H1 (cell line): ENCODE measurements at regions of chr15 and their contacts with region 1.

Region 1: GRCh38 chr15:88897456-88898194 is 2.3 kb upstream of the HAPLN3 start:
- DNase-seq: peak in 1 of 2 experiments; percentile 63
- H3K4me3 ChIP-seq: no peak overlapping the region; a peak in 2 of 8 replicates
- H3K27ac ChIP-seq: no peak overlapping the region
- H3K4me1 ChIP-seq: peaks cover 0 to 37% (median 22%) of the 10 kb centered on the region in 4 experiments; a peak in 6 of 7 replicates
- H3K27me3 ChIP-seq: no peaks in the 10 kb centered on the region
- CTCF ChIP-seq: peak in 1 of 3 experiments; percentile 12; a peak in 1 of 4 replicates
- EP300 ChIP-seq: no peak
- POLR2A ChIP-seq: peak in 1 of 2 experiments; percentile 60; a peak in 1 of 3 replicates
- RAD21 ChIP-seq: no peak

Region 2: GRCh38 chr15:88878720-88879184 is 18.9 kb before region 1 on chr15:
- CTCF ChIA-PET with region 1: interaction called, 95 read pairs
- POLR2A ChIA-PET with region 1: interaction called, 361 read pairs
- DNase-seq: peak in 1 of 2 experiments; percentile 89
- H3K4me3 ChIP-seq: no peak overlapping the region
- H3K27ac ChIP-seq: no peak overlapping the region
- H3K4me1 ChIP-seq: peaks cover 0 to 6% (median under 1%) of the 10 kb centered on the region in 4 experiments; a peak in 3 of 7 replicates
- H3K27me3 ChIP-seq: no peaks in the 10 kb centered on the region
- CTCF ChIP-seq: peak; percentile 89 to 96 (median 95)
- EP300 ChIP-seq: no peak
- POLR2A ChIP-seq: no peak
- RAD21 ChIP-seq: peak; percentile 80 to 87

Region 3: GRCh38 chr15:88938802-88939485 is 41.3 kb after region 1 on chr15:
- CTCF ChIA-PET with region 1: interaction called, 5 read pairs
- POLR2A ChIA-PET with region 1: interaction called, 10 read pairs
- DNase-seq: peak in 1 of 2 experiments; percentile 52
- H3K4me3 ChIP-seq: no peak overlapping the region
- H3K27ac ChIP-seq: no peak overlapping the region
- H3K4me1 ChIP-seq: peaks cover 0 to 7% (median 2%) of the 10 kb centered on the region in 4 experiments; a peak in 4 of 7 replicates
- H3K27me3 ChIP-seq: no peaks in the 10 kb centered on the region
- CTCF ChIP-seq: no peak
- EP300 ChIP-seq: no peak
- POLR2A ChIP-seq: no peak
- RAD21 ChIP-seq: peak; percentile 5 to 45; a peak in 2 of 4 replicates

Region 4: GRCh38 chr15:89003865-89004725 is 106.5 kb after region 1 on chr15:
- CTCF ChIA-PET with region 1: interaction called, 94 read pairs
- POLR2A ChIA-PET with region 1: interaction called, 607 read pairs
- DNase-seq: no peak
- H3K4me3 ChIP-seq: no peak overlapping the region
- H3K27ac ChIP-seq: no peak overlapping the region; the same call in 1 of the 2 replicates
- H3K4me1 ChIP-seq: peaks cover 16 to 35% (median 20%) of the 10 kb centered on the region in 4 experiments
- H3K27me3 ChIP-seq: no peaks in the 10 kb centered on the region
- CTCF ChIP-seq: peak; percentile 71 to 79 (median 74)
- EP300 ChIP-seq: no peak
- POLR2A ChIP-seq: no peak
- RAD21 ChIP-seq: peak; percentile 82 to 87

Region 5: DNA sequence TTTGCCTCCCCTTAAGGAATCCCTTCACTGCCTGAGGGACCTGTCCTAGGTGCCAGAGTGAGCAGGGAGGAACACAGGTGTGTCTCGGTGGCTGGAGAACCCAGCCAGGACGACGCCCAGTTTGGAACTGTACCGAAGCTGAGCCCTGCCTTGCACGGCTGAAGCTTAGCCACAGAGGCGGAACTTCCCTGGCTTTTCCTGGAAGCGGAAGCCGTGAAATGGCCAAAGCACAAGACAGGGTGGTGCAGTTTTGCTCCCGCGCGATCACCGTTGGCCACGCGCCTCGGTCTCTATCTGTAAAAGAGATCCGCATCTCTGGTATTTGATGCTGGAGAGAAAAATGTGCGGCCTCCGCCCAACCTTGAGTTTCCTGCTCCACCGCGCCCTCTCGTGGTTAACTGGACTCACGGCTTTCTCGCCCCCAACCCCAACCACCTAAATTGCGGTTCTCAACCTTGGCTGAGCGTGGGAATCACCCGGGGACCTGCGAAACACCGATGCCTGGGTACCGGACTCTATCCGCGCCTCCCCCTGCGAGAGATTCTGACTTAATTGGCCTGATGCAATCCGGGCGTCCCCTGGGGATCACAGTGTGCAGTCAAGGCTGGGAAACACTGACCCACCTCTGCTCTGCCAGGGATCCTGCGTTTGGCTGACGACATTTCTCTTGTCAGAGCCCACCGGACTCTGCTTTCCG is 119.9 kb after region 1 on chr15:
- CTCF ChIA-PET with region 1: interaction called, 8 read pairs
- POLR2A ChIA-PET with region 1: interaction called, 57 read pairs
- DNase-seq: peak; percentile 65 to 98
- H3K4me3 ChIP-seq: peak overlapping the region in 1 of 4 experiments; percentile 30; a peak in 3 of 8 replicates
- H3K27ac ChIP-seq: no peak overlapping the region
- H3K4me1 ChIP-seq: peaks cover 2 to 12% (median 3%) of the 10 kb centered on the region in 4 experiments; a peak in 5 of 7 replicates
- H3K27me3 ChIP-seq: no peaks in the 10 kb centered on the region; a peak in 1 of 7 replicates
- CTCF ChIP-seq: peak; percentile 84 to 95 (median 95)
- EP300 ChIP-seq: no peak
- POLR2A ChIP-seq: no peak
- RAD21 ChIP-seq: peak; percentile 82 to 92